ENCODE measurements at regions of chr15 and their contacts with region 1.

Region 1: DNA sequence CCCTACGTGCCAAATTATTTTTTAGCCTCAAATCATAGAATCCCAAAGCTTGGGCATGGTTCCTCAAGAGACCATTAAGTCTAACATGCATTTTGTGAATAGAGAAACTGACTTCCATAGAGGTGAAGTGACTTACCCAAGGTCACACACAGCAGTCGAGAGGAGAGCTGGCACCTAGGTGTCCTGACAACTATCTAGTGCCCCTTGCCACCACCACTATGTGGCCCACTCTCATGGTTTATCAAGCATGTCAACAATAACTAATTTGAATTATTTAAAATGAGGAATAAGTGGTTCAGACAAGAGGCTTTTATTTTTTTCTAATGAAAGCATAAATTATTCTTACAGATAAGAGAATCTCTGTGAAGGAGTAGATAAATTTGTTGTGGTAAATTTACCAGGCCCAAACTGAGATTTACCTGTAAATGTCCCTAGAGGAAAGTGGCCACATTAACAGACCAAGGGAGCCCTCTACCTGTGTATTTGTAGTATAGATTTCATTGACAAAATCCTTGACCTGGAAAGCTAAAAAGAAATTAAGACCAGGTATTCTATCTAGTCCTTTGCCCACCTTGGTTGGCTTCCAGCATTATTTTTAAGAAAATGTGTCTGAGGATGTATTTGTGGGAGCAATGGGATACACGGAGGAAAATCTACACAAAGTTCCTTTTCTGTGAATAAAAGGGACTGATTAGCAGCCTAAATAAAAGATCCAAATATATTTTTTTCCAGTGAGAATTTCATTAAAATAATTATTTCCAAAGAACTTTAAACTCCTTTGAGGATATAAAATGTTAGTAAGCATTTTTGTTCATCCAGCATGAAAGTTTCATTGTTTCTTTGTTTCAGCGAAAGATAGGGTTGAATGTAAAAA is 49.1 kb downstream of the IQCH start:
- DNase-seq: no peak
- ATAC-seq: peak; percentile 74
- H3K4me3 Mint-ChIP-seq: no peak overlapping the region
- H3K27ac Mint-ChIP-seq: no peak overlapping the region; the same call in 1 of the 2 replicates
- H3K4me1 Mint-ChIP-seq: peaks cover 7% of the 10 kb centered on the region
- H3K27me3 Mint-ChIP-seq: no peaks in the 10 kb centered on the region
- CTCF ChIP-seq: no peak

Region 2: DNA sequence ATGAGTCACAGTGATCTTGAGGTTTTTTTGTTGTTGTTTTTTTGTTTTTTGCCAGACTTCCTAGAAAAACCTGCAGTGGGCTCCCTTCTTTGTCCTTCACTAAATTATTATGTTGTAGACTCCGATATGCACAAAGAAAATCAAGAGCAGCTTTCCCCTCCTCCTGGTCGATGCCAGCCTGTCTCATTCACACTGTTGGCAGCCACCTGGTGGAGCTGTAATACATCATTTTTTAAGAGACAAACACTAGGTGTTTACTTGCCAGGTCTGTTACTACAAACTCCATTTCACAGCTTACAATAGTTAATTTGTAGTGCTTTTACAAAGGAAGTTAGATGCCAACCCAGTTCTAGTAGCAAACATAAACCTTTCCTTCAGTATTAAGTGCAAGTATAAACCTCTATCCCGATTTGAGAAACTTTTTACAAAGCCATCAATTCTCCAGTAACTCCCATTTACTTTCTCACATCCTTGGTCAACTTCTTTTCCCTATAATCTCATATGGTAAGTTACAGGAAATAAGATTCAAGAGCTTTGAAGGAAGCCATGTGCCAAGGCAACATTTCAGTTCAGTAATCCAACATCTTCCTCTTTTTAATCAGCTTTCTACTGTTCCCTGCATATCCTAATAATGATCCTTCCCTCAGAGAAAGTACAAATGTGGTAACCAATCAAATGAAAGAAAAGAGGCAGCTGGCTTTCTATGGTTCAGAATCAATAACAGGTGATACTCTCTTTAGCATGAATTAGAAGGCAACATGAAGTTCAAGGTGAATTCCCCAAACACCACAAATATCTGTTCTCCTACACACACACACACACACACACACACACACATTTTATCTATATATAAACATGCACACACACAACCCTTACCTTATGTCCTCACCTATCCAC is 63.2 kb before region 1 on chr15:
- CTCF ChIA-PET with region 1: interaction called, 11 read pairs
- POLR2A ChIA-PET with region 1: no interaction called
- DNase-seq: no peak
- ATAC-seq: peak; percentile 60
- H3K4me3 Mint-ChIP-seq: no peak overlapping the region
- H3K27ac Mint-ChIP-seq: peak overlapping the region; percentile 28; the same call in 1 of the 2 replicates
- H3K4me1 Mint-ChIP-seq: peaks cover 34% of the 10 kb centered on the region
- H3K27me3 Mint-ChIP-seq: no peaks in the 10 kb centered on the region
- CTCF ChIP-seq: no peak

Region 3: DNA sequence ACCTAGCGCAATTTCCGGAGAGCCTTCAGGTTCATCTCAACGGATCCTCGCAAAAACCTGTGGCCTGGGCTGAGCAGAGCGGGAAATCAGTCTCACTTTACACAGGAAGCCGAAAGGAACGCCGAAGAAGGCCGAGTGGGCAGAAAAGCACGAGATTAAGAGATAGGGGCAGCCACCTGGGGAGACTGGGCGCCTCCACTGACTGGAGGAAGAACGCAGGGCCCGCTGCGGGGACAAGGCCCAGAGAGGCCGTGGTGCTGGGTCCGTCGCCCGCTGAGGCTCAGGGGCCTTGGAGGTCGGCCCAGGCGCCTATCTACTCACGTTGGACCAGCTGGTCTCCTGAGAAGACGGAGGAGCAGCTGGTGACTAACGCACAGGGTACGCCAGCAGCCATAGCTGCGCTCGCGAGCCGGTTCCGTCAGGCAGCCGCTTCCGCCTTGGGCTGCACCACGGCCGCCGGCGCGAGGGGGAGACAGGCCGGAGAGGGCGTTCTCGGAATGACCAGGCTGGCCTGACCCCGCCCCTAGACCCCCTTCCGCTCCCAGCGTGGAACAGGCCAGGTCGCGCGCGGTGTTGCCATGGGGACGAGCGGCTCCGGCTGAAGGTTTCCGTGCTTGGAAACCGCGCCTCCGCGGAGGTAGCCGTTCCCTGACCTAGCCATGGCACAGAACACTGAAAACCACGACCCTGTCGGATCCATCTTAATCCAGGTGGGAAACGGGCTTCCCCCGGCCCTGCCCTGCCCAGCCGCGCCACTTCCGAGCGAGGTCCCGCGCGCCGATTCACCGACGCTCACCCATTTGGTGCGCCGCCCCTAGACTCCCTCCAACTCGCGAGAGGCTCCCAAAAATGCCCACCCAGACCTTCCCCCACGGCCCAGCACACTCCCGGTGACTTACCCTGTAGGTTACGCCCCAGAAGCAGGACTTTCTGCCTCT is 49.2 kb before region 1 on chr15 and contains the starts of genes AAGAB and IQCH:
- CTCF ChIA-PET with region 1: no interaction called
- POLR2A ChIA-PET with region 1: no interaction called
- DNase-seq: peak; percentile 99
- ATAC-seq: peak; percentile 95
- H3K4me3 Mint-ChIP-seq: peak within 1 kb of the TSS; percentile 100
- H3K27ac Mint-ChIP-seq: peak within 1 kb of the TSS; percentile 95
- H3K4me1 Mint-ChIP-seq: peaks cover 11% of the 10 kb centered on the region; the same call in 1 of the 2 replicates
- H3K27me3 Mint-ChIP-seq: peaks cover 25% of the 10 kb centered on the region
- CTCF ChIP-seq: no peak
- total RNA-seq, gene AAGAB: 36.6 to 41.7 TPM (median 37.2 TPM) in 3 replicates
- total RNA-seq, gene IQCH: 1.9 to 2.0 TPM (median 1.9 TPM) in 3 replicates